Activated CD4-positive, alpha-beta T cell treated with anti-CD3 and anti-CD28 coated beads for 36 hours (primary cell): ENCODE measurements at regions of chr14 and their contacts with region 1.

Region 1: GRCh38 chr14:103333754-103334643 is at the start of gene EIF5:
- DNase-seq: peak; percentile 99
- ATAC-seq: peak; percentile 91
- H3K4me3 Mint-ChIP-seq: peak within 1 kb of the TSS; percentile 79
- H3K27ac Mint-ChIP-seq: peak within 1 kb of the TSS; percentile 92
- H3K4me1 Mint-ChIP-seq: peaks cover 53% of the 10 kb centered on the region
- H3K27me3 Mint-ChIP-seq: no peaks in the 10 kb centered on the region
- total RNA-seq, gene EIF5: 222 to 234 TPM

Region 2: GRCh38 chr14:102086972-102087761 is 1246.8 kb before region 1 on chr14 and contains the start of gene HSP90AA1:
- CTCF ChIA-PET with region 1: no interaction called
- POLR2A ChIA-PET with region 1: no interaction called
- intact Hi-C with region 1: loop called in 1 of 2 experiments (anchors 1 kb)
- DNase-seq: peak; percentile 97
- ATAC-seq: peak; percentile 68
- H3K4me3 Mint-ChIP-seq: peak within 1 kb of the TSS; percentile 77
- H3K27ac Mint-ChIP-seq: peak within 1 kb of the TSS; percentile 92
- H3K4me1 Mint-ChIP-seq: peaks cover 46% of the 10 kb centered on the region
- H3K27me3 Mint-ChIP-seq: no peaks in the 10 kb centered on the region
- total RNA-seq, gene HSP90AA1: 1,344 to 1,372 TPM

Region 3: DNA sequence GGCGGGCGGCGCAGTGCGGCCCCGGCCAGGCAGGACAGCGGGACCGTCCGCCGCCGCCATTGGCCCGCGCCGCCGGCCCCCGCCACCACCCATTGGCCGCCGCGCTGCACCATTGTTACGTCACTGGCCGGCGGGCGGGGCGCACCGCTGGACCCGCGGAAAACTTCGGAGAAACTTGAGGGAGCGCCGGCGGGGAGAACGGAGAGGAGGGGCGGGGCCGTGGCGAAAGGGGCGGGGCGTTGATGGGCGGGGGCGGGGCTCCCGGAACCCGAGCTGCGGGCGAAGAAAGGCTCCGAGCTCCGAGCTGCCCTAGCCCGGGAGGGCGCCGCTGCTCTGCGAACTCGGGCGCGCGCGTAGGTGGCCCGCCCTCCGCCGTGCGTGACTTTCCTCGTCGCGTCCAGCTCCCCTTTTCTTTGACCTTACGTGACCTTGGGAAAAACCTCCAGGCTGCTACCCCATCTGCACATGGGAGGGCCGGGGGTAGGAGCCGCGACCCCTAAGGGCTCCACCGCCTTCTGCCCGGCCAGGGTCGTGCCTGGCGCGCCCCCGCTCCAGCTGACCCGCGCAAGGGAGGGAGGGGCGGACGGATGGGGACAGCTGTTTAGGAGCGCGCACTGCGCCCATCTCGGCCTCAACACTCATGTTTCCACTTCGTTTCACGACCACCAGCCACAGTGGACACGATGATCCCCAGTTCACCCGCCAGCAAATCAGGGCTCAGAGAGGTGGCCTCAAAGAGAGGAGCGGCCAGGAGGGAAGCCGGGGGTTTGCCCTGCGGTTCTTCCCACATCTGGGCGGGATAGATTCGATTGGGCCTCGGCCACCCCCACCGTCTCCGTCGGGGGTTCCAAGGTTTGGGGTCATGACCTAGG is 824.0 kb before region 1 on chr14 and contains the start of gene ANKRD9:
- CTCF ChIA-PET with region 1: no interaction called
- POLR2A ChIA-PET with region 1: no interaction called
- intact Hi-C with region 1: loop called in 1 of 2 experiments (anchors 1 kb)
- DNase-seq: peak; percentile 95
- ATAC-seq: peak; percentile 89
- H3K4me3 Mint-ChIP-seq: peak within 1 kb of the TSS; percentile 75
- H3K27ac Mint-ChIP-seq: peak within 1 kb of the TSS; percentile 51
- H3K4me1 Mint-ChIP-seq: peaks cover 16% of the 10 kb centered on the region
- H3K27me3 Mint-ChIP-seq: peaks cover 2% of the 10 kb centered on the region
- total RNA-seq, gene ANKRD9: 4.8 to 9.3 TPM

Region 4: DNA sequence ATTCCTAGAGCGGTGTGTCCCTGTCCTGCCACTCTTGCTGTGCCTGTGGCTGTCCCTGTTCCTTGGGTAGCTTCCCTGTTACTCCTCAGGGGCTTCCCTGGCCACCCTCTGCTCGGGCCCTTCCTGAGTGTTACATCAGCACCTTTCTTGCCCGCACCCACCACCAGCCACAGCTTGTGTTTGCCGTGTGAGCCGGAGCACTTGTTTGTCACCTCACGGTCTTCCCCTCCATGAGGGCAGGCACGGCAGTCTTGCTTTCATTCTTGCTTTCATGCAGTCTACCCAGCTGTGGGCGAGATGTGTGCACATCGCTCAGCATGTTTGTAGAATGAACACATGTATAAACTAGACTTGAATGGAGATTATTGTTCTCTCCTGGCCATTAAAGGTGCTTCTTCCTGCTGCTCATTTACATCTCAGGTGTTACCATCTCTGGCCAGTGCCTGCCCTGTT is 514.8 kb before region 1 on chr14:
- CTCF ChIA-PET with region 1: no interaction called
- POLR2A ChIA-PET with region 1: no interaction called
- intact Hi-C with region 1: loop called in 1 of 2 experiments (anchors 1 kb)
- DNase-seq: peak; percentile 91
- ATAC-seq: peak; percentile 74
- H3K4me3 Mint-ChIP-seq: peak overlapping the region; percentile 61
- H3K27ac Mint-ChIP-seq: peak overlapping the region; percentile 94
- H3K4me1 Mint-ChIP-seq: peaks cover 87% of the 10 kb centered on the region
- H3K27me3 Mint-ChIP-seq: no peaks in the 10 kb centered on the region

Region 5: DNA sequence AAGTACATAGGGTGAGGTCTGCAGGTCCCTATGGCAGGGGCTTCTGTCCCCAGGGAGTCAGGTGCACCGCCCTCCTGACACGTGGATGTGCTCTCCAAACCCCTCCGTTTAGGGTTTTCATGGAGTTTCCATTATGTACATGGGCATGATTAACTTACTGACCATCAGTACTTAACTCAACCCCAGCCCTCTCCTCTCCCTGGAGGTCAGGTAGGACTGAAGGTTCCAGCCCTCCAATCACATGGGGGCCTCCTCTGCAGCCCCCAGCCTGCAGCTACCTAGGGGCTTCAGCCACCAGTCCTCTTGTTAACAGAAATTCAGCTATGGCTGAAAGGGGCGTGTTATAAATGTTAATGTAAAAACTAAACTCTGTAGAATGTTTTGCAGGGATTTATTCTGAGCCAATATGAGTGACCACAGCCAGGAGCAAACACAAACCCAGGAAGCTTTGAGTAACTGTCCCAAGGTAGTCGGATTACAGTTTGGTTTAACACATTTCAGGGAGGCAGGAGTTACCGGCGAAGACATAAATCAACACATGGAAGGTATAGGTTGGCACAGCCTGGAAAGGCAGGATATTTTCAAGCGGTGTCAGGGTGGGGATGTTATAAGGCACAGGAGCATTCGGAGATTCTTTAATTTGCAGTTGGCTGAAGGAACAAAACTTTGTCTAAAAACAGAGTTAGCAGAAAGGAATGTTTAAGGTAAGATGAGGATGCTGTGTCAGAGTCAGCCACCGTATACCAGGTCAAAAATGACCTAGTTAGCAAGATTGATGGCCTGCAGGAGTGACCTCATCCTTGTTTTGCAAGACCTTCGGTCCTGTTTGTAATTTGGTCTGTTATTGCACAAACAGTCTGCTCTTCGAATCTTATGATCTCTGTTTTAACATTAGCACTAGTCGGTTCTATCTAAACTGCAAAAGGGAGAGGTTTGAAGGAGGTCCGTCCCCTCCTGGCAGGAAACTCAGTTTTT is 135.6 kb before region 1 on chr14:
- CTCF ChIA-PET with region 1: no interaction called
- POLR2A ChIA-PET with region 1: no interaction called
- intact Hi-C with region 1: no loop called
- DNase-seq: no peak
- ATAC-seq: no peak
- H3K4me3 Mint-ChIP-seq: no peak overlapping the region
- H3K27ac Mint-ChIP-seq: no peak overlapping the region
- H3K4me1 Mint-ChIP-seq: no peaks in the 10 kb centered on the region
- H3K27me3 Mint-ChIP-seq: peaks cover 2% of the 10 kb centered on the region

Region 6: GRCh38 chr14:103427485-103428443 is 93.8 kb after region 1 on chr14:
- CTCF ChIA-PET with region 1: no interaction called
- POLR2A ChIA-PET with region 1: no interaction called
- intact Hi-C with region 1: loop called in 1 of 2 experiments (anchors 1 kb)
- DNase-seq: peak; percentile 60
- ATAC-seq: peak; percentile 75
- H3K4me3 Mint-ChIP-seq: no peak overlapping the region
- H3K27ac Mint-ChIP-seq: peak overlapping the region; percentile 79
- H3K4me1 Mint-ChIP-seq: peaks cover 50% of the 10 kb centered on the region
- H3K27me3 Mint-ChIP-seq: no peaks in the 10 kb centered on the region

Region 7: GRCh38 chr14:103628684-103629502 is 294.9 kb after region 1 on chr14 and contains the start of gene KLC1:
- CTCF ChIA-PET with region 1: no interaction called
- POLR2A ChIA-PET with region 1: no interaction called
- intact Hi-C with region 1: loop called in 1 of 2 experiments (anchors 1 kb)
- DNase-seq: peak; percentile 92
- ATAC-seq: peak; percentile 77
- H3K4me3 Mint-ChIP-seq: peak within 1 kb of the TSS; percentile 87
- H3K27ac Mint-ChIP-seq: peak within 1 kb of the TSS; percentile 81
- H3K4me1 Mint-ChIP-seq: peaks cover 35% of the 10 kb centered on the region
- H3K27me3 Mint-ChIP-seq: no peaks in the 10 kb centered on the region
- total RNA-seq, gene KLC1: 97.4 to 113 TPM

Region 8: GRCh38 chr14:105020815-105021655 is 1687.0 kb after region 1 on chr14 and contains the start of gene CDCA4:
- CTCF ChIA-PET with region 1: no interaction called
- POLR2A ChIA-PET with region 1: no interaction called
- intact Hi-C with region 1: loop called in 1 of 2 experiments (anchors 5 kb)
- DNase-seq: peak; percentile 99
- ATAC-seq: peak; percentile 82
- H3K4me3 Mint-ChIP-seq: peak within 1 kb of the TSS; percentile 94
- H3K27ac Mint-ChIP-seq: peak within 1 kb of the TSS; percentile 93
- H3K4me1 Mint-ChIP-seq: peaks cover 72% of the 10 kb centered on the region
- H3K27me3 Mint-ChIP-seq: no peaks in the 10 kb centered on the region
- total RNA-seq, gene CDCA4: 52.0 to 62.7 TPM